Activated naive CD4-positive, alpha-beta T cell treated with anti-CD3 and anti-CD28 coated beads for 36 hours (primary cell): ENCODE measurements at regions of chr11 and their contacts with region 1.

Region 1: DNA sequence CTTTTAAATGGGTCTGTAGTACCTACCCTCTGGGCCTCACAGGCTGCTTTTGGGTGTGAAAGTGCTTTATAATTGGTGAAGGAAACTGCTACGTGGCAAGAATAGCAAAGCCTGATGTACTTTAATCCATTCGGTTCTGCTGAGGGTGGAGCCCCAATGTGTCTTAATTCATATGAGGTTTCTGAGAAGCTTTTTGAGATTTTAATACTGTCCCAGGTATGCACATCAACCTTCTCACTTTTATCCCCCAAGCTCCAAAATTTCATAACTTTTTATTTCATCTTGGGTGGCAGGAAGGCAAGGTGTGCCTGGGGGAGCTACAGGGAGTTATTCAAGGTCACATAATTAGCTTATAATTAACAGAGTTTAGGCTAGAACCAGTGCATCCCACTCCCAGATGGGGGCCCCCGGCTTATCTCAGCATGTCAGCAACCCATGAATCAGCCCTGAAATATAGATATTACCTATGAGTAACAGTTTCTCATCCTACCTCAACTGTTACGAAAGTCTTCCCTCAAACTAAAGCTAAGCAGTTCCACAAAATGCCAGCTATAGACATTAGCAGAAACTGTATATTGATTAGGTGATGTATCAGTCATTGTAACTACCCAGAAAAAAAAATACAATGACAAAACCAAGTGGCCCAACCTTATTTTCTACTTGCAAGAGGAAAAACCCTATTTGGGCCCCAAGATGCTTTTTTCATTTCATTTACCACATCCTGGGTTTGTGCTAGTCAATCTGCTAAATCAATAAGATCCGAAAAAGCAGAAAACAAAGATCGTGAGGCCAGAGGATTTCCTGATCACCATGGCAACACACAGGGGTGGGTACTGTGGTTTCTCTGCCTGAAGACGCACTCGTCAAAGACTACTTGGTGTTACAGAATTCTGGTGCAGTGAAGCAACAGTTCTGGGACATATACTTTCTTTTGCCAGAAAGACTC is 26.7 kb downstream of the CD44 start:
- DNase-seq: peak; percentile 95
- H3K4me3 Mint-ChIP-seq: peak overlapping the region; percentile 65
- H3K27ac Mint-ChIP-seq: peak overlapping the region; percentile 98
- H3K4me1 Mint-ChIP-seq: peaks cover 99% of the 10 kb centered on the region
- H3K27me3 Mint-ChIP-seq: no peaks in the 10 kb centered on the region

Region 2: DNA sequence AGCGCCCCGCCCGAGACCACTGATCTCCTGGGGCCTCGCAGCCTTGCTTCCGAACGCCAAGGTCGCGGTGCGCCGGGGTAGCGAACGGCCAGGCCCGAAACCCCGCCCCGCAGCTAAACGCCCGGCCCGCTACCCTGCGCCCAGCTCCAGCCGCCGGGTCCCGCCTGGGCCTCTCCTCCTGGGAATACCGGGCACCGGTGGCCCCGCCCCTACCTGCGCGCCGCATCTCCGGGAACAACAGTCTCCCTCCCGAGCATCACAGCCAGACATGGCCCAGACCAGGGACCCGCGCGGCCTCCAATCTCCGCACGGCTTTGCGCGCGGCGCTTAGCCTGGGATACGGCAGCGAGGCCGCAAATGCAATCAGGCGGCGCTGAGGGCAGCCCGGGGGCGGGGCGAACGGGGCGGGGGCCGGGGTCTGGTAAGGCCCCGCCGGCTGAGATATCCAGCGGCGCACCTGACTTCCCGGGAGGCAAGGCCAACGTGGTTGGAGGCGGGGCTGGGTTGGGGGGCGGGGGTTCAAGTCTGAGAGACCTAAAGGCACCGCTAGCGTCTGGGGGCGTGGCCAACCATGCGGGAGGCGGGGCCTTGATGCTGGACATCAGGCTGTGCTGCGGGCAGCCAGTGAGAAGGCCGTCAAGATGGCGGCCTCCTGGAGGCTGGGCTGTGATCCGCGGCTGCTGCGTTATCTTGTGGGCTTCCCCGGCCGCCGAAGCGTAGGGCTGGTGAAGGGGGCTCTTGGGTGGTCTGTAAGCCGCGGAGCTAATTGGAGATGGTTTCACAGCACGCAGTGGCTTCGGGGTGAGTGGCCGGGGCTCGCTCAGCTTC is 249.5 kb before region 1 on chr11 and contains the starts of genes APIP and PDHX:
- CTCF ChIA-PET with region 1: interaction called, 5 read pairs
- intact Hi-C with region 1: loop called (anchors 5 kb)
- DNase-seq: peak; percentile 98
- H3K4me3 Mint-ChIP-seq: peak within 1 kb of the TSS; percentile 99
- H3K27ac Mint-ChIP-seq: peak within 1 kb of the TSS; percentile 96
- H3K4me1 Mint-ChIP-seq: peaks cover 44% of the 10 kb centered on the region
- H3K27me3 Mint-ChIP-seq: no peaks in the 10 kb centered on the region
- total RNA-seq, gene APIP: 42.4 to 42.5 TPM
- total RNA-seq, gene PDHX: 38.2 to 40.9 TPM

Region 3: GRCh38 chr11:35030716-35031213 is 134.9 kb before region 1 on chr11:
- CTCF ChIA-PET with region 1: interaction called, 3 read pairs
- intact Hi-C with region 1: loop called (anchors 1 kb)
- DNase-seq: peak; percentile 55
- H3K4me3 Mint-ChIP-seq: peak overlapping the region; percentile 59
- H3K27ac Mint-ChIP-seq: peak overlapping the region; percentile 93
- H3K4me1 Mint-ChIP-seq: peaks cover 44% of the 10 kb centered on the region
- H3K27me3 Mint-ChIP-seq: no peaks in the 10 kb centered on the region

Region 4: DNA sequence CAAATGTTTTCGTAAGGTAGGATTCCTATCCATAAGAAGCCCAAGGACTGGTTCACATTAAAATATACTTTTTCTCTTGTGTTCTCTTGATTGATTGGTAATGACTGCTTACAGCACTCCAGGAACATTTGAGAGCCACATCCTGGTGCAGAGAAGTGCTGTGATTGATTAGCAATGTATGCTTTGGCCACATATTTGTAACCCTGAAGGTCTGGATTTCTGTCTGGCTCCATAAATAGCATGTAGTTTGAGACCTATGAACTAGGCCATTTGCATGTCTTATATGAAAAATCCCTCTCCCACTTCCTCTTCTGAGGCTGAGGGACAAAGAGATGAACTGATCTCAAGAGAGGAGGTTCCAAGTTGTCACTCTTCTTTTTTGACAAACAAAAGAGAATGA is 76.0 kb before region 1 on chr11:
- CTCF ChIA-PET with region 1: no interaction called
- intact Hi-C with region 1: no loop called
- DNase-seq: no peak
- H3K4me3 Mint-ChIP-seq: no peak overlapping the region
- H3K27ac Mint-ChIP-seq: no peak overlapping the region
- H3K4me1 Mint-ChIP-seq: peaks cover 53% of the 10 kb centered on the region
- H3K27me3 Mint-ChIP-seq: no peaks in the 10 kb centered on the region

Region 5: GRCh38 chr11:35126000-35126878 is 39.5 kb before region 1 on chr11:
- CTCF ChIA-PET with region 1: interaction called, 3 read pairs
- intact Hi-C with region 1: loop called (anchors 1 kb)
- DNase-seq: peak; percentile 81
- H3K4me3 Mint-ChIP-seq: peak overlapping the region; percentile 54
- H3K27ac Mint-ChIP-seq: peak overlapping the region; percentile 91
- H3K4me1 Mint-ChIP-seq: peaks cover 65% of the 10 kb centered on the region
- H3K27me3 Mint-ChIP-seq: no peaks in the 10 kb centered on the region

Region 6: GRCh38 chr11:35182317-35182939 is 16.7 kb after region 1 on chr11:
- CTCF ChIA-PET with region 1: interaction called, 26 read pairs
- intact Hi-C with region 1: loop called (anchors 1 kb)
- DNase-seq: no peak
- H3K4me3 Mint-ChIP-seq: peak overlapping the region; percentile 19
- H3K27ac Mint-ChIP-seq: peak overlapping the region; percentile 75
- H3K4me1 Mint-ChIP-seq: peaks cover 80% of the 10 kb centered on the region
- H3K27me3 Mint-ChIP-seq: no peaks in the 10 kb centered on the region

Region 7: GRCh38 chr11:35272391-35272902 is 106.8 kb after region 1 on chr11:
- CTCF ChIA-PET with region 1: no interaction called
- intact Hi-C with region 1: loop called (anchors 1 kb)
- DNase-seq: peak; percentile 70
- H3K4me3 Mint-ChIP-seq: peak overlapping the region; percentile 17
- H3K27ac Mint-ChIP-seq: peak overlapping the region; percentile 63
- H3K4me1 Mint-ChIP-seq: peaks cover 48% of the 10 kb centered on the region
- H3K27me3 Mint-ChIP-seq: no peaks in the 10 kb centered on the region

Region 8: GRCh38 chr11:35907648-35908431 is 742.1 kb after region 1 on chr11:
- CTCF ChIA-PET with region 1: no interaction called
- intact Hi-C with region 1: no loop called
- DNase-seq: no peak
- H3K4me3 Mint-ChIP-seq: no peak overlapping the region
- H3K27ac Mint-ChIP-seq: no peak overlapping the region
- H3K4me1 Mint-ChIP-seq: no peaks in the 10 kb centered on the region
- H3K27me3 Mint-ChIP-seq: peaks cover 3% of the 10 kb centered on the region